ENCODE measurements at regions of chr15 and their contacts with region 1.

Region 1: DNA sequence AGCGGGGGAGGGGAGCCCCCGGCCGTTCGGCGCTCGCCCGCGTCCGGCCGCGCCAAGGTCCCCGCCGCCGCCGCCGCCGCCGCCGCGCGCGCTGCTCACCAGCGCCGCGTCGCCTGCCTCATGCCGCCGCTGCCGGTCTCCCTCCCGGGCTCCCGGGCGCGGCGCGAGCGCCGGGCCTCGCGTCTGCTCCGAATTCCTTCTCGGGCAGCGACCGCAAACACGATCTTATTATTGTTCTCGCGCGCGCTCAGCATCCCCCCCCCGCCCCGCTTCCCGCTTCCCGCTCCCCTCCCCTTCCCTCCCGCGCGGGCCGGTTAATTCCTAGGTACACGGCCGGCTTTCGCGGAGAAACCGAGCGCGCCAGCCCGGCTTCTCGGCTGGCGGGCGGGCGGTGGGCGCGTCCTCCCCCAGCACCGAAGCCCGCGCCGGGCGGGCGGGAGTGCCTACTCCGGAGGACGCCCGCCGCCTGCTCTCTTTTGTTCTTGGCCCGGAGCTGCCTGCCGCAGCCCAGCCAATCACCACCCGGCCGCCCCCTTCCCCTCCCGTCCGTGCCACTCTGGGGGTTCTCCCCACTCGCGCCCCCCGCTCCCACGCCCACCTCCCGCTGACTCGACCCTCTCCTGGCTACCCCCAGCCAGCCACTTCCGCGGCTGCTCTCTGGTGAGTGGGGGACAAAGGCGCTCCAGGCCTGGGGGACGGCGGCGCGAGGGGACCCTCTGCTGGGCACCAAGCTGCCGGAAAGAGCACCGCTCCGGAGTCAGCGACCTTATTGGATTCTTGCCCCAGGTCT is at the start of gene HDGFL3:
- DNase-seq: peak in 8 of 9 experiments; percentile 0 to 56 (median 15)
- ATAC-seq: peak; percentile 61
- H3K4me3 ChIP-seq: peak within 1 kb of the TSS; percentile 51 to 55
- H3K4me3 Mint-ChIP-seq: peak within 1 kb of the TSS; percentile 93
- H3K27ac ChIP-seq: no peak within 1 kb of the TSS
- H3K27ac Mint-ChIP-seq: peak within 1 kb of the TSS; percentile 82
- H3K4me1 ChIP-seq: peaks cover 13% of the 10 kb centered on the region
- H3K4me1 Mint-ChIP-seq: peaks cover 16% of the 10 kb centered on the region
- H3K27me3 ChIP-seq: peaks cover 3 to 16% of the 10 kb centered on the region in 2 experiments
- H3K27me3 Mint-ChIP-seq: peaks cover 7% of the 10 kb centered on the region
- CTCF ChIP-seq: no peak
- total RNA-seq, gene HDGFL3: 12.7 to 15.5 TPM

Region 2: GRCh38 chr15:83011271-83012075 is 196.3 kb before region 1 on chr15 and contains the start of gene C15orf40:
- CTCF ChIA-PET with region 1: no interaction called
- POLR2A ChIA-PET with region 1: interaction called, 3 read pairs
- intact Hi-C with region 1: loop called (anchors 2 kb)
- DNase-seq: peak; percentile 62 to 94 (median 86)
- ATAC-seq: peak; percentile 80
- H3K4me3 ChIP-seq: peak within 1 kb of the TSS; percentile 86 to 95
- H3K4me3 Mint-ChIP-seq: peak within 1 kb of the TSS; percentile 100
- H3K27ac ChIP-seq: peak within 1 kb of the TSS; percentile 75 to 79
- H3K27ac Mint-ChIP-seq: peak within 1 kb of the TSS; percentile 99
- H3K4me1 ChIP-seq: peaks cover 26% of the 10 kb centered on the region
- H3K4me1 Mint-ChIP-seq: peaks cover 58% of the 10 kb centered on the region
- H3K27me3 ChIP-seq: no peaks in the 10 kb centered on the region
- H3K27me3 Mint-ChIP-seq: no peaks in the 10 kb centered on the region
- CTCF ChIP-seq: no peak
- total RNA-seq, gene C15orf40: 11.8 to 12.3 TPM

Region 3: GRCh38 chr15:83178869-83179325 is 28.9 kb before region 1 on chr15:
- CTCF ChIA-PET with region 1: no interaction called
- POLR2A ChIA-PET with region 1: no interaction called
- intact Hi-C with region 1: loop called in 1 of 2 experiments (anchors 1 kb)
- DNase-seq: no peak
- ATAC-seq: no peak
- H3K4me3 ChIP-seq: no peak overlapping the region
- H3K4me3 Mint-ChIP-seq: no peak overlapping the region
- H3K27ac ChIP-seq: no peak overlapping the region
- H3K27ac Mint-ChIP-seq: no peak overlapping the region
- H3K4me1 ChIP-seq: no peaks in the 10 kb centered on the region
- H3K4me1 Mint-ChIP-seq: no peaks in the 10 kb centered on the region
- H3K27me3 ChIP-seq: no peaks in the 10 kb centered on the region
- H3K27me3 Mint-ChIP-seq: no peaks in the 10 kb centered on the region
- CTCF ChIP-seq: no peak

Measured in CD8-positive, alpha-beta T cell (primary cell).